IMR-90 (cell line): ENCODE measurements at regions of chr4 and their contacts with region 1.

Region 1: GRCh38 chr4:119149110-119149509 is 13.5 kb downstream of the MYOZ2 start:
- DNase-seq: no peak
- ATAC-seq: no peak
- H3K4me3 ChIP-seq: no peak overlapping the region
- H3K27ac ChIP-seq: no peak overlapping the region
- H3K4me1 ChIP-seq: no peaks in the 10 kb centered on the region
- H3K27me3 ChIP-seq: no peaks in the 10 kb centered on the region
- CTCF ChIP-seq: no peak
- POLR2A ChIP-seq: no peak
- RAD21 ChIP-seq: no peak

Region 2: DNA sequence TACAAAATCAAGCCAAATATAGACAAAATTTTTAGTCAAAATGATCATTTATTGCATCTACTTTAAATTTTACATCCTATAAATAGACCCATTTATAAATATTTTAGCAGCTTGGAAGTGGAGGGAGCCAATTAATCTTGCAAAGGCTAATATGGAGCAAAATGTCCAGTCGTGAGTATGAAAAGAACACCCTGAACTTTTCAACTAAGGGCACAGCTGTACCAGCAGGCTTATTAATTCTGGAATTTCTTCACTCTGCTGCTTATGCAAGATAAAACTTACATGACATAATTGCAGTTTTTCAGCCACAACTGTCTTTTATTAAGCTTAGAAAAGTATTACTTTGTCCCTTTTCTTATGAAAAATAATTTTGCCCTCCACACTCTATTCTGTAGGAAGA is 40.5 kb after region 1 on chr4:
- CTCF ChIA-PET with region 1: no interaction called
- POLR2A ChIA-PET with region 1: no interaction called
- dilution Hi-C with region 1: no loop called
- in situ Hi-C with region 1: no loop called
- intact Hi-C with region 1: loop called (anchors 2 kb)
- DNase-seq: no peak
- ATAC-seq: no peak
- H3K4me3 ChIP-seq: no peak overlapping the region
- H3K27ac ChIP-seq: no peak overlapping the region
- H3K4me1 ChIP-seq: no peaks in the 10 kb centered on the region
- H3K27me3 ChIP-seq: no peaks in the 10 kb centered on the region
- CTCF ChIP-seq: no peak
- POLR2A ChIP-seq: no peak
- RAD21 ChIP-seq: no peak